ENCODE measurements at regions of chr6 and their contacts with region 1.

Region 1: GRCh38 chr6:168150551-168151320 is 71.7 kb upstream of the FRMD1 start:
- DNase-seq: peak in 1 of 2 donors; percentile 44
- ATAC-seq: peak; percentile 60

Region 2: DNA sequence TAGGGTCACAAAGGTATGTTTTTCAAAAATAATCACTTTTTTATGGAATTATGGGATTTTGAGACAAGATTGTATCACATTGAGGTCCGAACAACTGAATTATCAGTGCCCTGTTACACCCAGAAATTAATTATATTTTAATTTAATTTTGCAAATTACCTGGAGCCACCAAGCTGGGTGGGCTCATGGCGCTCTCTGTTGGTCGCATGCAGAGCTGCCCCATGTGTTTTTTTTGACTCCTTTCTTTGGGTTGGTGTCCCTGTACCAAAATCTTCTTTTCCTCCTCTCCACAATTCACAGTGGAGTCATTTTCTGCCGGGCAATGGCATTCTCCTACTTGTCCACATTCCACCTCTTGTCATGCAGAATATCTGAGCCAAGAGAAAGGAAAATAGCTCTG is 32.8 kb before region 1 on chr6:
- intact Hi-C with region 1: no loop called
- DNase-seq: no peak
- ATAC-seq: peak; percentile 58

Region 3: GRCh38 chr6:168355716-168356449 is 205.1 kb after region 1 on chr6:
- intact Hi-C with region 1: loop called in 1 of 2 experiments (anchors 5 kb)
- DNase-seq: peak; percentile 57 to 73
- ATAC-seq: peak; percentile 100

Region 4: DNA sequence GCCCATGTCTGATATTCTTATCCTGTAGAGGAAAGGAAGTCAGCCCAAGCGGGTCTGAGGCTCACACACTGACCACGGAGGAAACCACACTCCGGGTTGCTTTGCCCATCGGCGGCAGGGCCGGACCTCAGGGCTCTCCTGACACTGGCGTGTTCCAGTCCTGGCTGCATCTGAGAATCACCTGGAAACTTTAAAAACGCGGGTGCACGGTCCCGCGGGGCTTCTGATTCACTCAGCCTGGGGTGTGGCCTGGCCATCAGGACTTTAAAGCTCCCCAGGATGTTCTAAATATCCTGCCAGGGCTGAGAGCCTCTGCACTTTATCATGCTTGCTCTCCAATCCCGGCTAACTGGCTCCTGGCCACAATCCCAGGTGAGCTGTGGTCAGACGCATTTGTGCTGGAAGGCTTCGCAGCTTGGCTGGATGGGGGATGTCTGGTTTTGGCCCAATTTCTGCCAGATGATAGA is 216.6 kb after region 1 on chr6:
- intact Hi-C with region 1: no loop called
- DNase-seq: no peak
- ATAC-seq: no peak

Region 5: DNA sequence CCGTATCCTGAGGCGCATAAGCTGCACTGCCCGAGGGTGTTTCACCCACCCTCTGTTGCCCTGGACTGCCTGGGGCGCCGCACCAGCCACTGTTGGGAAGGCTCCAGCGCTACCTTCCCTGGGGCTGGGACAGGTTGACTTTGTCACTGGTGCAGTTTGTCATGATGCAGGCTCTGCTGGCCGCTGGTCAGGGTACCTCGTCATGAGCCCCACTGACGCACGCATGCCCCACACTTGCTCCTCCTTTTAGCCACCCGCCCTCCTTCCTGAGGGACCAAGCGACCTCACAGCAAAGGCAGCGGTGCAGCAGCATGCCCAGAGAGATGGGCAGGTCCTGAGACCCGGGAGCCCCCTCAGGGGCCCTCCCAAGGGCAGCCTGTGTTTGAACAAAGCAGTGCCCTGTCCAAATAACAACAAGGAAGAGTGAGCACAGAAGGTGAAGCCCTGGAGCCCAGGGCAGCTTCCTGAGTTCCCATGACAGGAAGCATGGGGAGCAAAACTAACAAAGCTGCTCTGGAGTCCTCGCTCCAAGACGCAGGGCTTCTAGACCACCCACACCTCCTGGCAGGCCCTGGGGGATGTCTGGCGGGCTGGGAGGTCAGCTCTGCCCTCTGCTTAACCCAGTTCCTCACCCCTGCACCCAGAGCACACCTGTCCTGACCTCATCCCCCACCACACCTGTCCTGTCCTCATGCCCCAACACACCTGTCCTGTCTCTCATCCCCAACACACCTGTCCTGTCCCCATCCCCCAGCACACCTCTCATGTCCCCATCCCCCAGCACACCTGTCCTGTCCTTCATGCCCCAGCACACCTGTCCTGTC is 240.2 kb after region 1 on chr6:
- intact Hi-C with region 1: no loop called
- DNase-seq: no peak
- ATAC-seq: no peak

Region 6: DNA sequence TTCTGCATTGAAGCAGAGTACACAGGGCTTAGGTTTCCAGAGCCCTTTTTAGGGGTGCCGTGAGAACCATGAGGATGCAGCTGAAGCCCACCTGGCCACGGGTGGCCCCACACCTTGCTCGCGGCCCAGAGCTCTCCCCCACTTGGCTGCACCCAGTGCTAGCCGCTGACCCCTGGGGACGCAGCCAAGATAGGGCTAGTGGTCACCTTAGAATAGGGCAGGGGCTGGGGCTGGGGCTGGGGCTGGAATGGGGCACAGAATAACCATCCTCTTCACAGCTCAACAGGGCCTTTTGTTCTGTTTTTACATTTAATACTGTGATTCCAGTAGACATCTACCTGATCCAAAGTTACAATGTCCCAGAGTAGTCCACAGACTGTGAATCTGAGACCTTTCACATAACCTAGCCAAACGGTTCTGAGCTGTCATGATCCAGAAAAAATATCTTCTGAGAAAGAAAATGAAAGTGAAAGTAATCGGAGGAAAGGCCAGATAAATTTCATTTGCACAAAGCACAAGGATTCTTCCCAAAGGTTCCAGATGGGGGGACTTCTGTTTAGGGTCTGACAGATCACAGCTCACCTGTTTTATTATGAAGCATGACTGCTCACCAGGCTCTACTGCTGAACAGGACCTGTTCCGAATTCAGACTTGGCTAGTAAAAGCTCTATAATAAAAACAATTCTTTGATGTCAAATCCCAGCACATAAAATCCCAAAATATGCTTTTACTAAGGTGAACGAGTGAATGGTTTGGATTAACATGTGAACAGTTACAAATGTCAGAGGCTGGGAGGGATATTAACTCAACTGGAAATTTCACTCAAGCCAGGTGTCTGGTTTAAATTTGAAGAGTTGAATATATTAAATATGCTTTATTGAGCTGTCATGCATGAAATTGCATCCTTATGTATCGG is 701.0 kb after region 1 on chr6:
- intact Hi-C with region 1: no loop called
- DNase-seq: no peak
- ATAC-seq: no peak